Calu3 (cell line): ENCODE measurements at regions of chr15 and their contacts with region 1.

Region 1: GRCh38 chr15:53611145-53611920 is 148.1 kb downstream of the WDR72 start:
- DNase-seq: peak; percentile 2
- H3K4me3 Mint-ChIP-seq: no peak overlapping the region
- H3K27ac Mint-ChIP-seq: no peak overlapping the region
- H3K4me1 Mint-ChIP-seq: no peaks in the 10 kb centered on the region
- H3K27me3 Mint-ChIP-seq: no peaks in the 10 kb centered on the region
- CTCF ChIP-seq: no peak

Region 2: DNA sequence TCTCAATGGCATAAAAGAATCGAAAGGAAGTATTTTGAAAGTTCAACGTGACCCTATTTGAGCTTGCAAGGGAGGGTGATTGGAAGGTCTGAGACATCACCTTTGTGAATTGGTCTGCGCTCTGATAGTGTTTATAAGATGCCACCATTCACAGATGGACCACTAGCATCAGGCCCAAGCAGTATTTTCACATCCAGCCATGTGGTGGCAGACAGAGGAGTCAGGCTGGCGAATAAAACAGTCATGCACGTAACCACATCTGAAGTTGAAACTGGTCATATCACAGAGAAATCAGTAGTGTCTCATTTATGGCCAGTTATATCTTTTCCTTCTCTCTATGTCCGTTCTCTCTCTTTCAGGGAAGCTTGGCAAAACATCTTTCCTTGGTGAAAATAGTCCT is 651.0 kb before region 1 on chr15:
- CTCF ChIA-PET with region 1: no interaction called
- intact Hi-C with region 1: loop called (anchors 10 kb)
- DNase-seq: no peak
- H3K4me3 Mint-ChIP-seq: no peak overlapping the region
- H3K27ac Mint-ChIP-seq: no peak overlapping the region
- H3K4me1 Mint-ChIP-seq: no peaks in the 10 kb centered on the region
- H3K27me3 Mint-ChIP-seq: peaks cover 13% of the 10 kb centered on the region
- CTCF ChIP-seq: no peak

Region 3: DNA sequence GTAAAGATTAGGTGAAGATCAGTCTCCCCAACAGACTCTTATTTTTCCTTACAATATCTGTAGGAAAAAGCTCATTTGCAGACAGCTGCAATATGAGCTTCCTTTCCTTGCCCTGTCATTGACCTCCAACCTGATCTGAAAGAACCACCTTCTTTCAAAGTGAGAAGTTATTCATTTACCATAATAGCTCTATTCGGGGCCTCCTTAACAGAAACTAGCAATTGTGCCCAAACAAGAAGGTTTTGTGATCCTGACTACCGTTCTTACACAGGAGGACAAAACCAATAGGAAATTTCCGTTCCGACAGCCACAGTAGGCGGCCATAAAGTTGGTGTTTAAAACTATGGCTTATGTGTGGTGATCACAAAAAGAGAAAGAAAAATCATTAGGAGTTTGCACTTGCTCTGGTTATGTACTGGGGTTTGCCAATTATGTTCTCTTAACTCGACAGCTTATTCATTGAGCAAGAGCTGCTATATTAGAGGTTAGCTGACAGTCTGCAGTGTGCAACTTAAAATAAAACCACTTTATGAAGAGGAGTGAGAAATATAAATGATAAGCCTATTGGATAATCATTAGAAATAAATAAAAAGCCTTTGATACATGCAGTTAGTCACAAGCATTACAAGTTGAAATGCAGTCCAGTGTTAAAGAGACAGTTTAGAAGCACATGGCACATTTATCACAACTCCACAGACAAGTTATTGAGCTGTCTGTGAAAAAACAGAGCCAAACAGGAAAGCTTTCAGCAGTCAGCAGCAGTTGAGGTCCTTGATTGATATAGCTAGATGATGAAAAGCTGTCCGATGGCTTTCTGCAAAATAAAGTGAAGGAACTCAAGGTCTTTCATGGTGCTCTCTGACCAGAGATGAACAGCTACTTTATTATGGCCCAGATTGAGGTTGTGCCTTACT is 51.7 kb before region 1 on chr15:
- CTCF ChIA-PET with region 1: interaction called, 5 read pairs
- intact Hi-C with region 1: loop called (anchors 2 kb)
- DNase-seq: peak; percentile 37
- H3K4me3 Mint-ChIP-seq: peak overlapping the region; percentile 53
- H3K27ac Mint-ChIP-seq: peak overlapping the region; percentile 92
- H3K4me1 Mint-ChIP-seq: peaks cover 34% of the 10 kb centered on the region
- H3K27me3 Mint-ChIP-seq: no peaks in the 10 kb centered on the region
- CTCF ChIP-seq: no peak

Region 4: DNA sequence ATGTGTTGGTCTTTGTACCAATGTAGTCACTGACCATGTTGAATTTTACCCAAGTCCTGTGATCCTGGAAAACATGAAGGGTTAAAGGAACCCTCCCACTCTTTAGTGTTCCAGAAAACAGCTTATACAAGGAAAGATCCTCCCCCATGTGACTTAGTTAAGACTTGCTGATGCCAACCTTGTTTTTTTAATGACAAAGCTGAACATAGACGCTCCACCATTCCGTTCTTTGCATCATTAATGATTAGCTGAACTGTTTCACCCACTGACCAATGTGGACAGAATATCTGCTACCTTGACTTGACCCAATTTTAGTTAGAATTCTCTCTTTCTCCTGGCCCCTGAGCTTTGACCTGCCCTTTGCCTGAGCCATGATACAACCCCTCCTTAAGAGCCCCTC is 151.6 kb after region 1 on chr15:
- CTCF ChIA-PET with region 1: no interaction called
- intact Hi-C with region 1: no loop called
- DNase-seq: no peak
- H3K4me3 Mint-ChIP-seq: no peak overlapping the region
- H3K27ac Mint-ChIP-seq: no peak overlapping the region
- H3K4me1 Mint-ChIP-seq: no peaks in the 10 kb centered on the region
- H3K27me3 Mint-ChIP-seq: no peaks in the 10 kb centered on the region
- CTCF ChIP-seq: no peak